PC-9 (cell line): ENCODE measurements at regions of chr6 and their contacts with region 1.

Region 1: GRCh38 chr6:128630182-128630581 is 109.8 kb upstream of the PTPRK start:
- DNase-seq: peak; percentile 75 to 95
- H3K4me3 ChIP-seq: no peak overlapping the region
- H3K27ac ChIP-seq: peak overlapping the region; percentile 44
- H3K4me1 ChIP-seq: peaks cover 47% of the 10 kb centered on the region
- H3K27me3 ChIP-seq: no peaks in the 10 kb centered on the region
- CTCF ChIP-seq: no peak

Region 2: DNA sequence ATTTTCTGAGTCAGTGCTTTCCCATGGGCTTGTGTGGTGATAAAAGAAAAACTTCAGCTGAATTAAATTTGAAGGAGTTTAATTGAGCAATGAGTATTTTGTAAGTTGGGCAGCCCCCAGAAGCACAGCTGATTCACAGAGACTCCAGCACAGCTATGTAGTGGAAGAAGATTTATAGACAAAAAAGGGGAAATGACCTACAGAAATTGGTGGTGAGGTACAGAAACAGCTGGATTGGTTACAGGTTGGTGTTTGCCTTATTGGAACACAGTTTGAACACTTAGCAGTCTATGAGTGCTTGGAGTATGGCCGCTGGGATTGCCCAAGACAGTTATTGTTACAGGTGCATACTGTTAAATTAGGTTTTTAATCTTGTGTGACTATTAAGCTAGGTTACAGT is 12.9 kb before region 1 on chr6:
- CTCF ChIA-PET with region 1: no interaction called
- POLR2A ChIA-PET with region 1: interaction called, 13 read pairs
- intact Hi-C with region 1: no loop called
- DNase-seq: no peak
- H3K4me3 ChIP-seq: no peak overlapping the region
- H3K27ac ChIP-seq: no peak overlapping the region
- H3K4me1 ChIP-seq: peaks cover 6% of the 10 kb centered on the region; the same call in 1 of the 2 replicates
- H3K27me3 ChIP-seq: no peaks in the 10 kb centered on the region
- CTCF ChIP-seq: no peak

Region 3: GRCh38 chr6:128979071-128979470 is 348.9 kb after region 1 on chr6:
- CTCF ChIA-PET with region 1: no interaction called
- POLR2A ChIA-PET with region 1: no interaction called
- intact Hi-C with region 1: no loop called
- DNase-seq: no peak
- H3K4me3 ChIP-seq: no peak overlapping the region
- H3K27ac ChIP-seq: no peak overlapping the region
- H3K4me1 ChIP-seq: no peaks in the 10 kb centered on the region
- H3K27me3 ChIP-seq: no peaks in the 10 kb centered on the region
- CTCF ChIP-seq: no peak